ENCODE measurements at regions of chr5 and their contacts with region 1.

Region 1: GRCh38 chr5:103224118-103224893 is 34.3 kb upstream of the MACIR start:
- DNase-seq: peak; percentile 60
- ATAC-seq: peak; percentile 96
- H3K4me3 ChIP-seq: peak overlapping the region in 2 of 3 experiments; percentile 14 to 39; a peak in 2 of 6 replicates
- H3K27ac ChIP-seq: no peak overlapping the region
- H3K4me1 ChIP-seq: peaks cover 6% of the 10 kb centered on the region; the same call in 1 of the 2 replicates
- H3K27me3 ChIP-seq: no peaks in the 10 kb centered on the region
- CTCF ChIP-seq: peak; percentile 80
- EP300 ChIP-seq: no peak
- POLR2A ChIP-seq: no peak
- RAD21 ChIP-seq: peak; percentile 44; the same call in 1 of the 2 replicates

Region 2: DNA sequence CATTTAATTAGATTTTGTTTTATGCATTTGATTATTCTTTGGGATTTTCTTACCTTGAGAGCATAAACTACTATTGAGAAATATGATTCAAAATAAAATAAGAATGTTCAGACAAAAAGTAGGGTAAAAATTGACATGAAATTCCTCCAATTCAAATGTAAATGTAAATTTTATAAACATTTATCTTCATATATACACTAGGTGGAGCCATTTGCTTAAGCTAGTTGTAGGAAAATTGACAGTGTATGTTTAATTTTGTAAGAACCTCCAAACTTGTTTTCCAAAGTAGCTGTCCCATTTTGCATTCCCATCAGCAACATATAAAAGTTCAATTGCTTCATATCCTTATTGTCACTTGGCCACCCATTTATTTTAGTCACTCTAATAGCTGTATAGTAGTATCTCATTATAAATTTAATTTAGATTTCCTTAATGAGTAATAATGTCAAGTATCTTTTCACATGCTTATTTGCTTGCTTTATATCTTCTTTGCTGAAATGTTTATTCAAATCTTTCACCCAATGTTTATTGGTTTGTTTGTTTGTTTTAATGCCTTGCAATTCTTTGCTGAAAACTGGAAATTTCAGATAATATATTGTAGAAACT is 687.9 kb before region 1 on chr5:
- CTCF ChIA-PET with region 1: no interaction called
- POLR2A ChIA-PET with region 1: no interaction called
- in situ Hi-C with region 1: no loop called
- intact Hi-C with region 1: loop called (anchors 2 kb)
- DNase-seq: no peak
- ATAC-seq: no peak
- H3K4me3 ChIP-seq: no peak overlapping the region
- H3K27ac ChIP-seq: no peak overlapping the region
- H3K4me1 ChIP-seq: peaks cover 4% of the 10 kb centered on the region; the same call in 1 of the 2 replicates
- H3K27me3 ChIP-seq: no peaks in the 10 kb centered on the region
- CTCF ChIP-seq: no peak
- EP300 ChIP-seq: no peak
- POLR2A ChIP-seq: no peak
- RAD21 ChIP-seq: no peak

Region 3: GRCh38 chr5:103031607-103032006 is 192.7 kb before region 1 on chr5:
- CTCF ChIA-PET with region 1: no interaction called
- POLR2A ChIA-PET with region 1: no interaction called
- in situ Hi-C with region 1: no loop called
- intact Hi-C with region 1: no loop called
- DNase-seq: no peak
- ATAC-seq: peak; percentile 65; the same call in 2 of the 3 replicates
- H3K4me3 ChIP-seq: no peak overlapping the region
- H3K27ac ChIP-seq: no peak overlapping the region
- H3K4me1 ChIP-seq: no peaks in the 10 kb centered on the region
- H3K27me3 ChIP-seq: no peaks in the 10 kb centered on the region
- CTCF ChIP-seq: no peak
- EP300 ChIP-seq: no peak
- POLR2A ChIP-seq: no peak
- RAD21 ChIP-seq: no peak

Region 4: GRCh38 chr5:103203226-103203625 is 21.1 kb before region 1 on chr5:
- CTCF ChIA-PET with region 1: no interaction called
- POLR2A ChIA-PET with region 1: no interaction called
- in situ Hi-C with region 1: no loop called
- intact Hi-C with region 1: no loop called
- DNase-seq: no peak
- ATAC-seq: no peak
- H3K4me3 ChIP-seq: no peak overlapping the region
- H3K27ac ChIP-seq: no peak overlapping the region
- H3K4me1 ChIP-seq: no peaks in the 10 kb centered on the region
- H3K27me3 ChIP-seq: no peaks in the 10 kb centered on the region
- CTCF ChIP-seq: no peak
- EP300 ChIP-seq: no peak
- POLR2A ChIP-seq: no peak
- RAD21 ChIP-seq: no peak

Measured in HepG2 (cell line).